ENCODE measurements at regions of chr2 and their contacts with region 1.

Region 1: GRCh38 chr2:227471924-227472264 is at the start of gene AGFG1:
- DNase-seq: no peak
- H3K4me3 ChIP-seq: peak within 1 kb of the TSS; percentile 86
- CTCF ChIP-seq: peak; percentile 99

Region 2: DNA sequence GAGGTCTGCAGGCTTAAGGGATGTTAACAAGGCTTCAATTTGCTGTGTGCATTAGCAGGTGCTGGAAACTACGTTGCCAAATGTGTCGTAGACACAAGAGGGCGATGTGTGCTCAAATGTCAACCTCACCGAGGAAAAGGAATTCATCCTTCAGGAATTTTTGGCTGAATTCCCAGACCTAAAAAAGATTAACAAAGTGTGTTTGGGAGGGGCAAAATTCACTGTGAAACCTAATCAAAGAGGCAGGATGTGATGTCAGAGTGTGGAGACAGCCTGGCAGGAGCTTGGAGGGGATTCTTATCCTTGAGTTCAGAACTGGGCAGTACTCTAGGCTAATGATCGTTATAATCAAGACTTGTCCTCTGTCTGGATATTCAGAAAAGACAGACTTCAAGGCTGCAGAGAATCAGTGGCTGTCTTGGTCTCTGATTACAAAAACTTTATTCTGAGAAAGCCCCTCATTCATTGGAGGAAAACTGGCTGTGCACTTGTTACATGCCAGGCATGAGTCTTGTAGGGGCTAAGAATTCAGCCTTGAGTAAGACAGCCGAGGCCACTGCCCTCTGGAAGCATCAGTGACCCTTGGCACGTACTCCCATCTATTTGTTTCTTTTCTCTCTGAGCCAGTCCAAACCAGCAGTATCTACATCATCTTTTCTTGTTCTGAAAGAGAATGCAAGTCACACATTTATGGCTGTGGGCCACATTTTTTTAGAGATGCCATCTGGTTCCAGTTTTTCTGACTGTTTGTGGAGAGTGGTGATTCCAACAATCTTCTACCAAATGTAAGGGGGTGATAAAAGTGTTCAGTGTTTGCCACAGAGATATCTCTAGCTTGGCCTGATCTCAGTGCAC is 65.5 kb before region 1 on chr2:
- CTCF ChIA-PET with region 1: interaction called, 11 read pairs
- POLR2A ChIA-PET with region 1: no interaction called
- DNase-seq: peak; percentile 84
- H3K4me3 ChIP-seq: peak overlapping the region; percentile 1; the same call in 1 of the 2 replicates
- CTCF ChIP-seq: peak; percentile 62

Region 3: GRCh38 chr2:227460070-227460485 is 11.8 kb before region 1 on chr2:
- CTCF ChIA-PET with region 1: interaction called, 26 read pairs
- POLR2A ChIA-PET with region 1: no interaction called
- DNase-seq: no peak
- H3K4me3 ChIP-seq: no peak overlapping the region
- CTCF ChIP-seq: no peak

Region 4: DNA sequence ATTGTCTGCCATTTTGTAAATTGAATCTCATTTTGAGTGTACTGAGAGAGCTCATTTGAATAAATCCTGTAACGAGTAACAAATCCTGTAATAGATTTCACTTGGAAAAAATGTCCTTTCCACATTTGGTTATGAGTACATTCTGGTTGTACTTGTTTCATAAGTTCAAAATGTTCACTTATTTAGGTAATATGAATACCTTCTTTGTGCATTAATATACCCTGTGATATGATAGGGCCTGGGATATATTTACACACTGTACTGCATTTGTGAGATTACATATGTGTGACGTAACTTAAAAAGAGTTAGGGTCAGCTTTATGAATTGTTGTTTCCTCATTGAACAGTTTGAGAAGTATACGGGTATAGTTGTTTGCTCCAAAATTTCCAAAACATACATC is 16.2 kb after region 1 on chr2:
- CTCF ChIA-PET with region 1: interaction called, 11 read pairs
- POLR2A ChIA-PET with region 1: no interaction called
- DNase-seq: no peak
- H3K4me3 ChIP-seq: no peak overlapping the region
- CTCF ChIP-seq: no peak